Lower leg skin (tissue), 4 donors: ENCODE measurements at regions of chr6 and their contacts with region 1.

Region 1: GRCh38 chr6:106411643-106412200 is 51.2 kb downstream of the CRYBG1 start:
- DNase-seq: no peak
- H3K4me3 ChIP-seq: no peak overlapping the region
- CTCF ChIP-seq: no peak
- POLR2A ChIP-seq: no peak

Region 2: GRCh38 chr6:106390088-106390487 is 21.6 kb before region 1 on chr6:
- intact Hi-C with region 1: loop called (anchors 1 kb)
- DNase-seq: no peak
- H3K4me3 ChIP-seq: no peak overlapping the region
- CTCF ChIP-seq: no peak
- POLR2A ChIP-seq: no peak

Region 3: GRCh38 chr6:106451439-106451838 is 39.7 kb after region 1 on chr6:
- intact Hi-C with region 1: no loop called
- DNase-seq: no peak
- H3K4me3 ChIP-seq: no peak overlapping the region
- CTCF ChIP-seq: no peak
- POLR2A ChIP-seq: no peak